ENCODE measurements at regions of chr4 and their contacts with region 1.

Region 1: GRCh38 chr4:141890279-141890678 is 253.9 kb downstream of the IL15 start:
- DNase-seq: no peak
- ATAC-seq: no peak
- H3K4me3 ChIP-seq: no peak overlapping the region
- H3K27ac ChIP-seq: no peak overlapping the region
- H3K4me1 ChIP-seq: no peaks in the 10 kb centered on the region
- H3K27me3 ChIP-seq: no peaks in the 10 kb centered on the region

Region 2: GRCh38 chr4:141711014-141711610 is 179.2 kb before region 1 on chr4:
- intact Hi-C with region 1: no loop called
- DNase-seq: peak in 1 of 3 donors; percentile 40
- ATAC-seq: no peak
- H3K4me3 ChIP-seq: no peak overlapping the region
- H3K27ac ChIP-seq: no peak overlapping the region
- H3K4me1 ChIP-seq: no peaks in the 10 kb centered on the region
- H3K27me3 ChIP-seq: no peaks in the 10 kb centered on the region

Region 3: DNA sequence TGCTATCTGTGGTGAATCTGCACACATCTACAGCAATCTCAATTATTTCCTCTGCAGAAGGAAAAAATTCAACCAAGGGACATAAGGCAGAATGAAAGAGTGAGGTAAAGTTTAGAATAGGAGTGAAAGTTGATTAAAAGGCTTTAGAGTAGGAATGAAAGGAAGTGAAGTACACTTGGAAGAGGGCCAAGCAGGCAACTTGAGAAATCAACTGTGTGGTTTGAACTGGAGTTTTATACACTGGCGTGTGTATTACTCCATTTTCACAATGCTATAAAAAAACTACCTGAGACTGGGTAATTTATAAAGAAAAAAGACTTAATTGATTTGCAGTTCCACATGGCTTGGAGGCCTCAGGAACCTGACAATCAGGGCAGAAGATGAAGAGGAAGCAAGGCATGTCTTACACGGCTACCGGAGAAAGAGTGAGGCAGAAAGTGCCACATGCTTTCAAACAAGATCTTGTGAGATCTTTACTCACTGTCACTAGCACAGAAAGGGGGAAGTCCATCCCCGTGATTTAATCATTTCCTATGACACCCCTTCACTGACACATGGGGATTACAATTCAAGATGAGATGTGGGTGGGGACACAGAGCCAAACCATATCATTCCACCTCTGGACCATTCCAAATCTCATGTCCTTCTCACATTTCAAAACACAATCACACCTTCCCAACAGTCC is 19.1 kb before region 1 on chr4:
- intact Hi-C with region 1: loop called in 1 of 4 experiments (anchors 2 kb)
- DNase-seq: no peak
- ATAC-seq: no peak
- H3K4me3 ChIP-seq: no peak overlapping the region
- H3K27ac ChIP-seq: no peak overlapping the region
- H3K4me1 ChIP-seq: no peaks in the 10 kb centered on the region
- H3K27me3 ChIP-seq: no peaks in the 10 kb centered on the region